ENCODE measurements at regions of chr9 and their contacts with region 1.

Region 1: GRCh38 chr9:106677374-106677773 is 185.6 kb upstream of the ZNF462 start:
- DNase-seq: no peak
- ATAC-seq: no peak
- H3K4me3 ChIP-seq: no peak overlapping the region
- H3K4me3 Mint-ChIP-seq: no peak overlapping the region
- H3K27ac ChIP-seq: no peak overlapping the region
- H3K27ac Mint-ChIP-seq: no peak overlapping the region
- H3K4me1 ChIP-seq: no peaks in the 10 kb centered on the region
- H3K4me1 Mint-ChIP-seq: no peaks in the 10 kb centered on the region
- H3K27me3 ChIP-seq: no peaks in the 10 kb centered on the region
- H3K27me3 Mint-ChIP-seq: no peaks in the 10 kb centered on the region

Region 2: GRCh38 chr9:107413315-107413714 is 735.9 kb after region 1 on chr9:
- CTCF ChIA-PET with region 1: interaction called in 1 of 2 experiments, 10 read pairs
- POLR2A ChIA-PET with region 1: no interaction called
- DNase-seq: no peak
- ATAC-seq: no peak
- H3K4me3 ChIP-seq: no peak overlapping the region
- H3K4me3 Mint-ChIP-seq: no peak overlapping the region
- H3K27ac ChIP-seq: no peak overlapping the region
- H3K27ac Mint-ChIP-seq: no peak overlapping the region
- H3K4me1 ChIP-seq: no peaks in the 10 kb centered on the region
- H3K4me1 Mint-ChIP-seq: no peaks in the 10 kb centered on the region
- H3K27me3 ChIP-seq: peaks cover 0 to 6% of the 10 kb centered on the region in 2 experiments
- H3K27me3 Mint-ChIP-seq: peaks cover 2 to 5% of the 10 kb centered on the region in 2 donors